ENCODE measurements at regions of chr17 and their contacts with region 1.

Region 1: DNA sequence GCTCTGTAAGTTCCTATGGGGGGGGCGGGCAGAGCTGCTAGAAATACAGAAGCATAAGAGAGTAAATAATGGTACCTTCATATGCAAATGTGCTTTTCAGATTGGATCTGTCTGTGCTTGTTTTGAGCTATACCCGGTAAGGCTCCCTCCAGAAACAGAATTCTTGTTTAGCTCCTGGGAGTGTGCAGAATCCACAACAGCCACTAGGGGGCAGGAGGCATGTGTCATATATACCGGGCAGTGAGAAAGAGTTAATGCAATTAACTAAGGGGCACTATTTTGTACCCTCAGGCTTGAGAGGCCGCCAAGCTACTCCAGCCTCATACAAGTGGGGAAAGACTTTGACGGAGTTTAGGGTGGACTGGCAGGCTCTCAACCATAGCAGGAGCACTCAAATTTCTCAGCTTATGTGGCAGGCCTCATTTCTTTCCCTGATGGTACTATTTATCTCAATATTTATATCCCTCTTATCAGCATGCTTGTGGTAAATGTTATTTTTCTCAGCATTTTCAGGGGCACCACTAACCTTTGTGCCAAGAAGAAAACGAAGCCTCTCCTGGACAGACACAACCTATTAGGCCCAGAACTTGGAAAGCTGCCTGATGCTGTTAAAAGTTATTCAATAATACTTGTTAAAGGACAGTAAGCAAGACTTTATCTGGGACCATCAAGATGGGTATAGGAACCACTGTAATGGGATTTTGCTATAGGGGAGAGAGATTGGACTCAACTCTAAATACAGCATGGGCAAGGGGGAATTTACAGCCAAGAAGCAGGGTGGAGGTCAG is 10.7 kb upstream of the CENPV start:
- DNase-seq: peak; percentile 61
- ATAC-seq: peak; percentile 99
- H3K4me3 ChIP-seq: no peak overlapping the region
- H3K27ac ChIP-seq: no peak overlapping the region
- H3K4me1 ChIP-seq: peaks cover 3% of the 10 kb centered on the region; the same call in 1 of the 2 replicates
- H3K27me3 ChIP-seq: no peaks in the 10 kb centered on the region
- CTCF ChIP-seq: peak; percentile 89 to 96 (median 95)
- EP300 ChIP-seq: no peak
- POLR2A ChIP-seq: no peak
- RAD21 ChIP-seq: peak; percentile 93

Region 2: DNA sequence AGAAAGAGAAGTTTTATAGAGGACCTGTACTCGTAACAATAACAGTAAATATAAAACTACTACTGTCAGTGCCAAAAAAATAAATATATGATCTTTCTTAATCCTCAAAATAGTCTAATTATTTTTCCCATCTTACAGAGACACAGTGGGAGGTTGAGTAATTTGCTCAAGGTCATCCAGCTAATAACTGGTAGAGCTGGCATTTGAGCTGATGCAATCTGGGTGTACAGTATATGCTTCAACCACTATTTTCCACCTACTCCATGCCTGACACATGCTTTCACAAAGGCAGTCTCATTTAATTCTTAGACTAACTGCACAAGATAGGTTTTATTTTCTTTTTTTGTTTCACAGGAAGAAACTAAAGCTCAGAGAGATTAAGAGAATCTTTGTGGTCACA is 113.3 kb before region 1 on chr17:
- CTCF ChIA-PET with region 1: no interaction called
- POLR2A ChIA-PET with region 1: no interaction called
- RAD21 ChIA-PET with region 1: no interaction called
- SMC1A ChIA-PET with region 1: no interaction called
- in situ Hi-C with region 1: no loop called
- intact Hi-C with region 1: no loop called
- DNase-seq: no peak
- ATAC-seq: no peak
- H3K4me3 ChIP-seq: no peak overlapping the region
- H3K27ac ChIP-seq: no peak overlapping the region
- H3K4me1 ChIP-seq: no peaks in the 10 kb centered on the region
- H3K27me3 ChIP-seq: no peaks in the 10 kb centered on the region
- CTCF ChIP-seq: no peak
- EP300 ChIP-seq: no peak
- POLR2A ChIP-seq: no peak
- RAD21 ChIP-seq: no peak

Region 3: GRCh38 chr17:16304830-16305229 is 59.1 kb before region 1 on chr17:
- CTCF ChIA-PET with region 1: interaction called, 37 read pairs
- POLR2A ChIA-PET with region 1: no interaction called
- RAD21 ChIA-PET with region 1: interaction called, 13 read pairs
- SMC1A ChIA-PET with region 1: interaction called, 8 read pairs
- in situ Hi-C with region 1: no loop called
- intact Hi-C with region 1: no loop called
- DNase-seq: no peak
- ATAC-seq: peak; percentile 78
- H3K4me3 ChIP-seq: no peak overlapping the region
- H3K27ac ChIP-seq: no peak overlapping the region
- H3K4me1 ChIP-seq: no peaks in the 10 kb centered on the region
- H3K27me3 ChIP-seq: no peaks in the 10 kb centered on the region
- CTCF ChIP-seq: peak; percentile 46 to 61 (median 51)
- EP300 ChIP-seq: no peak
- POLR2A ChIP-seq: no peak
- RAD21 ChIP-seq: peak; percentile 45

Region 4: DNA sequence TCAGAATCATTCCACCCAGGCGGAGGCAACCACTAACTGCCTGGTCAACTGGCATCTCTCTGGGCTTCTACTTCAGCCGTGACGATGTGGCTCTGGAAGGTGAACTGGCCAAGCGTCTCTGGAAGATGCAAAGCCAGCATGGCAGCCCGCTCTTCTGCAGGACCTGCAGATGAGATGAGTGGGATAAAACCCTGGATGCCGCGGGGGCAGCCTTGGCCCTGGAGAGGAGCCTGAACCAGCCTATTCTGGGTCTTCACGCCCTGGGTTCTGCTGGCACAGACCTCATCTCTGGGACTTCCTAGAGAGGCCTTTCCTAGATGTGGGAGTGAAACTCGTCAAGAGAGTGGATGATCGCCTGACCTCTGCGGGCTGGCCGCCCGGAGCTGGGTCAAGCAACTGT is 27.5 kb after region 1 on chr17:
- CTCF ChIA-PET with region 1: interaction called, 18 read pairs
- POLR2A ChIA-PET with region 1: no interaction called
- RAD21 ChIA-PET with region 1: no interaction called
- SMC1A ChIA-PET with region 1: interaction called, 4 read pairs
- in situ Hi-C with region 1: no loop called
- intact Hi-C with region 1: no loop called
- DNase-seq: no peak
- ATAC-seq: no peak
- H3K4me3 ChIP-seq: no peak overlapping the region
- H3K27ac ChIP-seq: no peak overlapping the region
- H3K4me1 ChIP-seq: no peaks in the 10 kb centered on the region
- H3K27me3 ChIP-seq: no peaks in the 10 kb centered on the region
- CTCF ChIP-seq: no peak
- EP300 ChIP-seq: no peak
- POLR2A ChIP-seq: no peak
- RAD21 ChIP-seq: no peak

Region 5: GRCh38 chr17:16428098-16428882 is 64.3 kb after region 1 on chr17:
- CTCF ChIA-PET with region 1: interaction called, 10 read pairs
- POLR2A ChIA-PET with region 1: interaction called, 5 read pairs
- RAD21 ChIA-PET with region 1: interaction called, 7 read pairs
- SMC1A ChIA-PET with region 1: interaction called, 8 read pairs
- in situ Hi-C with region 1: no loop called
- intact Hi-C with region 1: no loop called
- DNase-seq: no peak
- ATAC-seq: peak; percentile 93
- H3K4me3 ChIP-seq: no peak overlapping the region
- H3K27ac ChIP-seq: no peak overlapping the region
- H3K4me1 ChIP-seq: no peaks in the 10 kb centered on the region
- H3K27me3 ChIP-seq: no peaks in the 10 kb centered on the region
- CTCF ChIP-seq: peak; percentile 58 to 76 (median 75)
- EP300 ChIP-seq: no peak
- POLR2A ChIP-seq: no peak; the same call in 1 of the 2 replicates
- RAD21 ChIP-seq: peak; percentile 44

Region 6: GRCh38 chr17:16453493-16453851 is 89.5 kb after region 1 on chr17:
- CTCF ChIA-PET with region 1: interaction called, 29 read pairs
- POLR2A ChIA-PET with region 1: no interaction called
- RAD21 ChIA-PET with region 1: interaction called, 13 read pairs
- SMC1A ChIA-PET with region 1: interaction called, 11 read pairs
- in situ Hi-C with region 1: no loop called
- intact Hi-C with region 1: no loop called
- DNase-seq: no peak
- ATAC-seq: no peak
- H3K4me3 ChIP-seq: no peak overlapping the region
- H3K27ac ChIP-seq: no peak overlapping the region
- H3K4me1 ChIP-seq: peaks cover 4% of the 10 kb centered on the region; the same call in 1 of the 2 replicates
- H3K27me3 ChIP-seq: no peaks in the 10 kb centered on the region
- CTCF ChIP-seq: no peak
- EP300 ChIP-seq: no peak
- POLR2A ChIP-seq: no peak
- RAD21 ChIP-seq: no peak

Region 7: DNA sequence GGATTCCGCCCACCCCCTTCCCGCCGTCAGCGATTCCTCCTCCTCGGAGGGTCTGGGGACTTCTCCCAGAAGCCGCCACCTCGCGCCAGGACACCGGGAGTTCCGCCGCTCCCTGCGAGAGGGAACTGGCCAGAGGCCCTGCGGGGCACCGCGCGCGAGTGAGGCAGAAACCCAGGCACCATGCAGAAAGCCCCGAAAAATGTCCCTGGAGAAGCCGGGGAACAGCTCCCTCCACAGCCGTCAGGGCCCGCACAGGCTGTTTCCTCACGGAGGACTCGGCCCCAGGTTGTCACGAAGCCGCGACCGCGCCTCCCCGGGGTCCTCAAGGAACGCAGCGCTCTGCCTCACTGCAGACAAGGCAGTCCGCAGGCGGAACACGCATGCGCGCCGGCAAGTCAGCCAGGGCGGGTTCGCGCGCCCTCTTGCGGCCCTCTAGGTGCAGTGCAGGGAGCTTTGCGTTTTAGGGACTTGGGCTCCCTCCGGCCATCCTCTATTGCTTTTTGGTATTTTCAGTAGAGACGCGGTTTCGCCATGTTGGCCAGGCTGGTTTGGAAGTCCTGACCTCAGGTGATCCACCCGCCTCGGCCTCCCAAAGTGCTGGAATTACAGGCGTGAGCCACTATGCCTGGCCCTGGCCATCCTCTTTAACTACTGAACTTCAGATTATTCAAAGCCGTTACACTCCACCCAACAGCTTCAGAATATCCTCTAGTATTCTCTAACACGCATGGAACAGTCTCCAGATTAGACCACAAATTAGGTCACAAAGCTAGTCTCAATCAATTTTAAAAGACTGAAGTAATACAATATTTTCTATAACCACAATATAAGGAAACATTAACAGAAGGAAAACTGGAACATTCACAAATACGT is 225.4 kb after region 1 on chr17:
- CTCF ChIA-PET with region 1: interaction called, 9 read pairs
- POLR2A ChIA-PET with region 1: no interaction called
- RAD21 ChIA-PET with region 1: interaction called, 4 read pairs
- SMC1A ChIA-PET with region 1: interaction called, 4 read pairs
- in situ Hi-C with region 1: no loop called
- intact Hi-C with region 1: loop called (anchors 5 kb)
- DNase-seq: peak; percentile 28
- ATAC-seq: peak; percentile 97
- H3K4me3 ChIP-seq: peak overlapping the region; percentile 54
- H3K27ac ChIP-seq: no peak overlapping the region
- H3K4me1 ChIP-seq: no peaks in the 10 kb centered on the region
- H3K27me3 ChIP-seq: peaks cover 0 to 2% of the 10 kb centered on the region in 2 experiments; a peak in 1 of 4 replicates
- CTCF ChIP-seq: peak; percentile 95 to 99 (median 97)
- EP300 ChIP-seq: no peak
- POLR2A ChIP-seq: no peak; the same call in 1 of the 2 replicates
- RAD21 ChIP-seq: peak; percentile 79